Right ventricle myocardium inferior (tissue), 1 donor: ENCODE measurements at regions of chr22 and their contacts with region 1.

Region 1: DNA sequence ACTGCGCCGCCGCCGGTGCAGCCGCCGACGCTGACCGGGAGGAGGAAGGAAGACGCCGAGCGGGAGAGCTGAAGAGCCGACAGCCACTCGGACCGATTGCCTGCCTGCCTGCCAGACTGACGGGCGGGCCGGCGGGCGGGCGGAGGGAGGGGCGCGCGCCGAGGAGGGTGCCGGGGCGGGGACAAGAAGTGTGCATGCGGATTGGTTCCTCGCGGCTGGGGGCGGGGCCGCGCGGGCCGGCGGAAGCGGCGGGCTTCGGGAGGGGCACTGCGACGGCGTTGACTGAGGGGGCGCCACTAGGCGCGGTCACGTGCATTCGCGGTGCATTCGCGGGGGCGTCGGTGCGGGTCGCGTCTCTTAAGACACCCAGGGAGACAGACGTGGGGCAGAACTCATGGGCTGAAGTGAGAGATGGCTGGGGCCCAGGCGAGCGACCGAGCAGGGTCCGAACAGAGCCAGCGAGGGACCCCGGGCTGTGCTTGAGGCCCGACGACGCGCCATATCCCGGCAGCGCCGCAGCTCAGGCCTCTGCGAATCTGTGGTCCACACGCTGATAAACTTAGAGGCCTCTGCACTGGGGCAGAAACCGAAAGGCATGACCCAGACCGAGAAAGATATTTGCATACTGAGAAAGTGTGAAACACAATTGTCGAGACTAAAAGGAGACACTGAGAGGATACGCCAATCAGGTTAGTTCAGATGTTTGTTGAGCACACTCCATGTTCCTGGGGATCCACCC is at the start of gene MAPK1:
- DNase-seq: peak; percentile 97
- ATAC-seq: peak; percentile 99
- total RNA-seq, gene MAPK1: 79.2 TPM

Region 2: DNA sequence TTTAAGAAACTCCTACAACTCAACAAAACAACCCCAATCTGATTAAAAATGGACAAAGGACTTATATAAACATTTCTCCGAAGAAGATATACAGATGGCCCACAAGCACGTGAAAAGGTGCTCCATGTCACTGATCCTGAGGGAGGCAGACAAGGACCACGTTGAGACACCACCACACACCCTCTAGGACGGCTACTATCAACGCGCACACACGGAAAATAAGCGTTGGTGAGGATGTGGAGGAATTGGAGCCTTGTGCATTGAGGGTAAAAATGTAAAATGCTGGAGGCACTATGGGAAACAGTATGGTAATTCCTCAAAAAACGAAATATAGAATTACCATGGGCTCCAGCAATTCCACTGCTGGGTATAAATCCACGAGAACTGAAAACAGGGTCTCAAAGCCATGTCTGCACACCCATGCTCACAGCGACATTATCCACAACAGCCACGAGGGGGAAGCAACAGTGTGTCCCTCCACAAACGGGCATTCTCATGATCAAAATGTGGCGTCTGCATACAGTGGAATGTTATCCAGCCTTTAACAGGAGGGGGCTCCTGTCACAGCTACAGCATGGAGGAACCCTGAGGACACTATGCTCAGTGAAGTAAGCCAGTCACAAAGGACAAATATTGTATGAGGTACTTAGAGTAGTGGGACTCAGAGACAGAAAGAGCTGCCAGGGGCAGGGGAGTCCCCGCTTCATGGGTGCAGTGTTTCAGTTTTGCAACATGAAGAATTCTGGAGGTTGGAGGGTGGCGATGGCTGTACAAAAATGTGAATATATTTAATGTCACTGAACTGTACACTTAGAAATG is 154.6 kb before region 1 on chr22:
- intact Hi-C with region 1: loop called (anchors 10 kb)
- DNase-seq: no peak
- ATAC-seq: peak; percentile 93

Region 3: GRCh38 chr22:21735200-21736076 is 132.3 kb before region 1 on chr22 and contains the start of gene YPEL1:
- intact Hi-C with region 1: loop called (anchors 2 kb)
- DNase-seq: peak; percentile 99
- ATAC-seq: peak; percentile 99
- total RNA-seq, gene YPEL1: 4.4 TPM

Region 4: GRCh38 chr22:21796867-21797266 is 70.8 kb before region 1 on chr22:
- intact Hi-C with region 1: loop called (anchors 5 kb)
- DNase-seq: no peak
- ATAC-seq: peak; percentile 37

Region 5: DNA sequence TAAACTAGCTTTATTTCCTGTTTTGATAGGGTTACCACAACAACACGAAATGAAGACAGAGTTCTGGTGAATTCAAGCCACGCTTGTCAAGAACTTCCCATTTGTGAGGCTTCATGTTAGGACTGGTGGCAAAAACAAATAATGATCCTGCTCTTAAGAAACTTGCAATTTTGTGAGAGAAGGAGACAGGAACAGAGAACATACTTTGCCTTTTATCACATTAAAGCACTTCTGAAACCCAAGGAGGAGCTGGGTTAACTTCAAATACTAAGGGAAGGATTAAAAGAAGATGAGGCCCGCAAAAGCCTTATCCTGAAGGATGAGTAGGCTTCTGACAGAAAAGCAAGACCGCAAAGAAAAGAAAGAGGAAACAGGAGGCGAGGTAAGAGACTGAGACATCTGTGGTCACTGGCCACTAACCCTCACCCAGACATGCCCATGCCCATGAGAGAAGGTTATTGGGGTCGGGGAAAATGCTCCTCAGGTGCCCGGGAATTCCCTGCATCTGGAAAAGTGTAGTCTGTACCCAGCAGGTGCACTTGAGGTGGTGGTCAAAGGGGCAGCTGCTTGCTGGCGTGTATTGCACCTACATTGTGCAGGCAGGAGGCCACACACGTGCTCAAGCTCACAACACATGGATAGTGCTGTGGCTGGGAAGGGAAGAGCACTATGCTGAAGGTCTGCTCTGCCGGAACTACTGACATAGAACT is 50.8 kb before region 1 on chr22:
- intact Hi-C with region 1: loop called (anchors 5 kb)
- DNase-seq: no peak
- ATAC-seq: peak; percentile 82

Region 6: DNA sequence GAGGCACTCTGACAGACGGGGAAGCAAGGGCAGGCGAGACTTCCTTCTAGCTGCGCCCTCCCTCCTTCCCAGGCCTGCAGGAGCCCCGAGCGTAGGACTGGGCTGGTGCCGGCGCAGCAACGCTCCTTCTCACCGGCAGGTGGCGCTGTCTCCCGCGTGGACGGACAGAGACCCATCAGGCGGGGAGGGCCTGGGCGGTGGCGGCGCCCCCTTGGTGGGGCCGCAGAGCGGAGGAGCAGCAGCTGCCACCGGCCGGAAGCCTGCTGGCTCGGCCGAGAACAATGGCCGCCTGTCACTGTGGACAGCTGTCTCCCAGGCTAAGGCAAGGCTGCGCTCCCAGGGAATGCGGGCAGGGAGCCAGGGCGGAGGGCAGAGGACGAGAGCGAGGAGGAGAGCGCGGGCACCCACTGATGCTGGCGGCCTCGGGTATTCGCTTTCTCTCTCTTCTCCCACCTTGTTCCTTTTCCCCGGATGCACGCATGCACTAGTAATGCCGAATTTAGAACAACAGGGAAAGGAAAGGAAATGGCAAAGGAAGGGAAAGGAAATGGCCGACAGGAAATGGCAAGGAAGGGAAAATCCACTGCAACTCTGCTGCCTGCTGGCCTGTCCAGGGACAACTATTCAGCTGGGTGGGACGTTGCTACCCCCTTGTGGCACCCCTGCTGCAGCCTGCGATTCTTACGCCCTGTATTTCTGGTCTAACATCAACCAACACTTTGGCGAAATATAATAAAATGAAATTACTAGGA is 70.5 kb after region 1 on chr22:
- intact Hi-C with region 1: loop called (anchors 2 kb)
- DNase-seq: peak; percentile 96
- ATAC-seq: peak; percentile 94

Region 7: GRCh38 chr22:22103078-22103875 is 235.6 kb after region 1 on chr22:
- intact Hi-C with region 1: no loop called
- DNase-seq: no peak
- ATAC-seq: no peak